ENCODE measurements at regions of chr16 and their contacts with region 1.

Region 1: DNA sequence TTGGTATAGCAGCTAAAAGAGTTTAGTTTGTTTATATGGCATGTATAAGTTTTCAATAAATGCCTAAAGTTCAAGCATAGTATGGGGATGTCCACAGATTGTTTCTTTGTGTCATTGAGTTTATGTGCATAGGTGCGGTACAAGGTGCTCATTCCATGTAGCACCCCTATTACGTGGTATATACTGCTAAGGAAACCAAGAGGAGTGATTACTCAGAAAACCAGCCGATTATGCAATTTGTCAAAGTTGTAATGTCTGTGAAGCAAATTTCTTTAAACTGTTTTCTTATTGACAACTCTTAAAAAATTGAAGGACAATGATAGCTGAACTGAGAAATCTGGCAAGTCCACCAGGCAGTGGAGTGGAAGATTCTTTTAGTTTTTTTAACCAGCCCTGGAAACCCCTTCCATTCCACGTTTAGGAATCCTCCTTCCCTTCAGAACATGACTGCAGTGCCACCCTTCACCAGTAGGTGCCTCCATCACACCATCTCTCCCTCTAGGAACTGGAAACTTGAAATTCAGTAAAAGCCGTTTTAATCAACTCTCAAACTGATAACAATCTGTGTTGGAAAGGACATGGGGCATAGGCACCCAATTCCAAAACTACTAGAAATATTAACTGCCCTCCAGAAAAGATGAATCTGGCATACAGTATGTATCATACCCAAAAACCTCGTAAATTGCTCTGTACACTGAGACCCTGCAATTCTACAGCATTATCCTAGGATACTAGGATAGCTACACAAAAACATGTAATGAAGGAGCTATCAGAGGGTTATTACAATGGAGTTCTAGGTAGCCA is 43.5 kb downstream of the REXO5 start:
- DNase-seq: peak in 34 of 35 experiments; percentile 9 to 78 (median 51)
- ATAC-seq: peak in 3 of 4 experiments; percentile 40 to 55 (median 44)
- H3K4me3 ChIP-seq: no peak overlapping the region
- H3K4me3 Mint-ChIP-seq: no peak overlapping the region
- H3K27ac ChIP-seq: no peak overlapping the region
- H3K27ac Mint-ChIP-seq: no peak overlapping the region
- H3K4me1 ChIP-seq: peaks cover 0 to 5% of the 10 kb centered on the region in 2 experiments
- H3K4me1 Mint-ChIP-seq: peaks cover 8 to 14% (median 12%) of the 10 kb centered on the region in 3 donors
- H3K27me3 ChIP-seq: no peaks in the 10 kb centered on the region
- H3K27me3 Mint-ChIP-seq: no peaks in the 10 kb centered on the region

Region 2: DNA sequence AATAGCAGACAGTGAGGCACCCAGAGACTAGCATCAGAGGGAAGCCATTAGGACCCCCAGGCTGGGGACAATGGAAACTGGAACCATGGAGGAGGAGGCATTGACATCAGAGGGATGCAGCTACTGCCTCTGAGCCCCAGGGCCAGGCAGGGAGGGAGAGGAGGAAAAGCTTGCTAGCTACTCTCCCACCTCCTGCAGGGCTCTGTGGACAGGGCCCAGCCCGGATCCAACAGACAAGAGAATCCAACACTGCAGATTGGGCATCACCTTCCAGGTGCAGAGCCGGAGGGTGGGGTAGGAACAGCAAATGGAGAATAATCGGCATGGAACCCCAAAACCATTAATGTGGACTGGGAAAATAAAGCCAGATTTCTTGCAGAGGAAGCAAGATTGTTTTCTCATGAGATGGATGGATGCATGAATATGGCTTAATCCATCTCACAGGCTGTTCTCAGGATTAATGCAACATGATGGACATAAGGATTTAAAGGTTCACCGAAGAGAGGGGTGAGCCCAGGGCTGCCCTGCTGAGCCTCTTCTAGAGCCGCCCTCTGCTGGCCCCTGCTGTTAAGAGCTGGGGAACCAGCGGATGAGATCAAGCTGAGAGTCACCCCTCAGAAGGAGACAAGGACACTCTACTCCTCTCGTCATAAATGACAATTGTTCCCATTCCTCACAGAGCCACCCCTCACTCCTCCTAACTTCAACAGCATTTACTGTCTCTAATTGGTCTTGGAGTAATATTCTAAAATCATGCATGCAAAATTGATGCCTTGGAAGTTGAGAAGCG is 252.0 kb after region 1 on chr16:
- CTCF ChIA-PET with region 1: interaction called in 1 of 2 experiments, 15 read pairs
- POLR2A ChIA-PET with region 1: no interaction called
- DNase-seq: peak in 18 of 35 experiments; percentile 1 to 26 (median 7)
- ATAC-seq: peak in 1 of 4 experiments; percentile 60
- H3K4me3 ChIP-seq: no peak overlapping the region
- H3K4me3 Mint-ChIP-seq: no peak overlapping the region
- H3K27ac ChIP-seq: no peak overlapping the region
- H3K27ac Mint-ChIP-seq: no peak overlapping the region
- H3K4me1 ChIP-seq: no peaks in the 10 kb centered on the region
- H3K4me1 Mint-ChIP-seq: no peaks in the 10 kb centered on the region
- H3K27me3 ChIP-seq: peaks cover 0 to 6% of the 10 kb centered on the region in 2 experiments
- H3K27me3 Mint-ChIP-seq: peaks cover 21 to 26% of the 10 kb centered on the region in 2 donors